Testis (tissue), 5 donors: ENCODE measurements at regions of chr22 and their contacts with region 1.

Region 1: GRCh38 chr22:32079130-32080089 is 36.3 kb downstream of the SLC5A1 start:
- DNase-seq: peak; percentile 34
- H3K4me3 ChIP-seq: no peak overlapping the region
- H3K27ac ChIP-seq: no peak overlapping the region
- H3K4me1 ChIP-seq: peaks cover 8% of the 10 kb centered on the region
- H3K27me3 ChIP-seq: no peaks in the 10 kb centered on the region
- CTCF ChIP-seq: no peak
- POLR2A ChIP-seq: no peak

Region 2: GRCh38 chr22:33451866-33452469 is 1372.6 kb after region 1 on chr22:
- intact Hi-C with region 1: loop called (anchors 5 kb)
- DNase-seq: no peak
- H3K4me3 ChIP-seq: no peak overlapping the region
- H3K27ac ChIP-seq: no peak overlapping the region
- H3K4me1 ChIP-seq: no peaks in the 10 kb centered on the region
- H3K27me3 ChIP-seq: no peaks in the 10 kb centered on the region
- CTCF ChIP-seq: no peak
- POLR2A ChIP-seq: no peak